Mammary epithelial cell (primary cell): ENCODE measurements at regions of chr22 and their contacts with region 1.

Region 1: DNA sequence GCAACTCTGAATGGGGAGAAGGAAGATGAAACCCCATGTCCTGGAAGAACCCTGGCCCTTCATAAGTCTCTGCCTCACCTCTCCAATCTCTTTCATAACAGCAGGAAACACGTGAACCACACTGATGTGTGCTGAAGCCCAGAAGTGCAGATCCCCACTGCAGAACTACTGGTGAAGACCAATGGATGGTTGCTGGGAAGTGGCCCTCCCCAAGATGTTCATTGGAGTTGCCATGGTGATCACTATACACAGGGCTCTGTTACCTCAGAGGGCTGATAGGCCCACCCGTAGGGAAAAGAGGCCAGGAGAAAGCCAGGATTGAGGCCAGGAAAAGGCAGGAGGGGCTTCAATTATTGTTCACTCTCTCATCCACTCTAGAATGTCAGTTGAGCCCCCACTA is 11.6 kb downstream of the TST start:
- DNase-seq: no peak
- H3K4me3 ChIP-seq: no peak overlapping the region
- H3K27ac ChIP-seq: no peak overlapping the region
- H3K4me1 ChIP-seq: no peaks in the 10 kb centered on the region
- H3K27me3 ChIP-seq: no peaks in the 10 kb centered on the region
- CTCF ChIP-seq: no peak

Region 2: DNA sequence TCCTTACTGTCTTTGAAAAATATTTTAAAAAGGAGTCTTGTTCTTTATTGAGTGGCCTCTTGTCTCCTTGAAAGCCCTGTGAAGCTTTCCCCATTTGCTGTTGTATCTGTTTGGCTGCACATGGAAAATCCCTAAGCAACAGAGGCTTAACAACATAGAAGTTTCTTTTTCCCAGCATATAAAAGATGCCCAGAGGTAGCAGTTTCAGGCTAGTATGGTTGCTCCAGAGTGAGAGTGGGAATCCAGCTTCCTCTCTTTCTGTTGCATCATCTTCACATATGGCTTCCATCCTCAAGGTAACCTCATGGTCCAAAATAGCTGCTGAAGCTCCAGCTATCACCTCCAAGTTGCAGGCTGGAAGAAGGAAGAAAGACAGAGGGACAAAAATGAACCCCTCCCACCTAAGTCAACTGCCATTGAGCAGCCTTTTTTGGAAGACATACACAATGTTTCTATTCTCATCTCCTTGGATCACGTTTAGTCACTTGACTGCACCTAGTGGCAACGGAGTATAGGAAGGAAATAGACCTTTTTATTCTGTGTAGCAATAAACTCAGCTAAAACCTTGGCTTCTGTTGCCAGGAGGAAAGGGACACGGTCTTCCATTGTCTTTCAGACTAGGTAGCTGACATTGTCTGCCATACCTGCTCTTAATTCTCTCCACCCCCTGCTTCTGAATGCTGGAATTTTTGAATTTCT is 88.9 kb before region 1 on chr22:
- CTCF ChIA-PET with region 1: no interaction called
- dilution Hi-C with region 1: loop called (anchors 5 kb)
- in situ Hi-C with region 1: no loop called
- intact Hi-C with region 1: no loop called
- DNase-seq: no peak
- H3K4me3 ChIP-seq: no peak overlapping the region
- H3K27ac ChIP-seq: no peak overlapping the region
- H3K4me1 ChIP-seq: no peaks in the 10 kb centered on the region
- H3K27me3 ChIP-seq: peaks cover 2% of the 10 kb centered on the region
- CTCF ChIP-seq: no peak